Transverse colon (tissue), 4 donors: ENCODE measurements at regions of chr13 and their contacts with region 1.

Region 1: GRCh38 chr13:29162638-29163235 is 342.6 kb downstream of the MTUS2 start:
- DNase-seq: no peak
- H3K4me3 ChIP-seq: no peak overlapping the region
- H3K27ac ChIP-seq: no peak overlapping the region
- H3K4me1 ChIP-seq: no peaks in the 10 kb centered on the region
- H3K27me3 ChIP-seq: no peaks in the 10 kb centered on the region
- CTCF ChIP-seq: no peak
- EP300 ChIP-seq: no peak
- POLR2A ChIP-seq: no peak

Region 2: GRCh38 chr13:29105777-29106176 is 57.0 kb before region 1 on chr13:
- in situ Hi-C with region 1: loop called in 1 of 4 experiments (anchors 10 kb)
- intact Hi-C with region 1: no loop called
- DNase-seq: no peak
- H3K4me3 ChIP-seq: no peak overlapping the region
- H3K27ac ChIP-seq: no peak overlapping the region
- H3K4me1 ChIP-seq: no peaks in the 10 kb centered on the region
- H3K27me3 ChIP-seq: no peaks in the 10 kb centered on the region
- CTCF ChIP-seq: no peak
- EP300 ChIP-seq: no peak
- POLR2A ChIP-seq: no peak